K562 (cell line): ENCODE measurements at regions of chr17 and their contacts with region 1.

Region 1: GRCh38 chr17:49567871-49568694 is 7.6 kb upstream of the NXPH3 start:
- DNase-seq: peak; percentile 63 to 86 (median 70)
- ATAC-seq: peak; percentile 75
- H3K4me3 ChIP-seq: no peak overlapping the region
- H3K27ac ChIP-seq: no peak overlapping the region
- H3K4me1 ChIP-seq: peaks cover 0 to 24% of the 10 kb centered on the region in 2 experiments; a peak in 4 of 5 replicates
- H3K27me3 ChIP-seq: peaks cover 11 to 42% of the 10 kb centered on the region in 2 experiments; a peak in 3 of 5 replicates
- CTCF ChIP-seq: peak; percentile 94 to 97 (median 95)
- EP300 ChIP-seq: no peak
- POLR2A ChIP-seq: no peak
- RAD21 ChIP-seq: peak; percentile 88 to 94

Region 2: GRCh38 chr17:49450735-49451134 is 117.3 kb before region 1 on chr17:
- CTCF ChIA-PET with region 1: no interaction called
- POLR2A ChIA-PET with region 1: no interaction called
- in situ Hi-C with region 1: no loop called
- intact Hi-C with region 1: no loop called
- DNase-seq: no peak
- ATAC-seq: no peak
- H3K4me3 ChIP-seq: no peak overlapping the region
- H3K27ac ChIP-seq: no peak overlapping the region
- H3K4me1 ChIP-seq: peaks cover 4 to 5% of the 10 kb centered on the region in 2 experiments; a peak in 3 of 5 replicates
- H3K27me3 ChIP-seq: peaks cover 22 to 39% of the 10 kb centered on the region in 2 experiments; a peak in 4 of 5 replicates
- CTCF ChIP-seq: no peak
- EP300 ChIP-seq: no peak
- POLR2A ChIP-seq: no peak
- RAD21 ChIP-seq: no peak

Region 3: GRCh38 chr17:49694847-49695683 is 127.0 kb after region 1 on chr17:
- CTCF ChIA-PET with region 1: interaction called, 167 read pairs
- POLR2A ChIA-PET with region 1: interaction called, 5 read pairs
- in situ Hi-C with region 1: loop called (anchors 5 kb)
- intact Hi-C with region 1: loop called (anchors 1 kb)
- DNase-seq: peak; percentile 57 to 68 (median 60)
- ATAC-seq: peak; percentile 64
- H3K4me3 ChIP-seq: no peak overlapping the region
- H3K27ac ChIP-seq: no peak overlapping the region
- H3K4me1 ChIP-seq: peaks cover 0 to 4% of the 10 kb centered on the region in 2 experiments; a peak in 1 of 5 replicates
- H3K27me3 ChIP-seq: no peaks in the 10 kb centered on the region; a peak in 1 of 5 replicates
- CTCF ChIP-seq: peak; percentile 91 to 96 (median 92)
- EP300 ChIP-seq: no peak
- POLR2A ChIP-seq: no peak
- RAD21 ChIP-seq: peak; percentile 93 to 96

Region 4: GRCh38 chr17:49779739-49780231 is 211.7 kb after region 1 on chr17:
- CTCF ChIA-PET with region 1: interaction called, 7 read pairs
- POLR2A ChIA-PET with region 1: no interaction called
- in situ Hi-C with region 1: no loop called
- intact Hi-C with region 1: loop called (anchors 2 kb)
- DNase-seq: peak; percentile 35 to 78 (median 44)
- ATAC-seq: peak; percentile 95
- H3K4me3 ChIP-seq: no peak overlapping the region
- H3K27ac ChIP-seq: peak overlapping the region; percentile 35; the same call in 2 of the 3 replicates
- H3K4me1 ChIP-seq: peaks cover 5 to 16% of the 10 kb centered on the region in 2 experiments; a peak in 4 of 5 replicates
- H3K27me3 ChIP-seq: no peaks in the 10 kb centered on the region
- CTCF ChIP-seq: peak; percentile 61 to 81 (median 79)
- EP300 ChIP-seq: no peak
- POLR2A ChIP-seq: no peak
- RAD21 ChIP-seq: peak; percentile 80 to 87

Region 5: GRCh38 chr17:49851387-49852291 is 283.6 kb after region 1 on chr17:
- CTCF ChIA-PET with region 1: interaction called, 7 read pairs
- POLR2A ChIA-PET with region 1: interaction called, 3 read pairs
- in situ Hi-C with region 1: loop called (anchors 5 kb)
- intact Hi-C with region 1: loop called (anchors 2 kb)
- DNase-seq: peak; percentile 74 to 84 (median 82)
- ATAC-seq: peak; percentile 93
- H3K4me3 ChIP-seq: peak overlapping the region; percentile 49
- H3K27ac ChIP-seq: no peak overlapping the region
- H3K4me1 ChIP-seq: peaks cover 0 to 15% of the 10 kb centered on the region in 2 experiments; a peak in 2 of 5 replicates
- H3K27me3 ChIP-seq: peaks cover 3 to 24% of the 10 kb centered on the region in 2 experiments; a peak in 4 of 5 replicates
- CTCF ChIP-seq: peak; percentile 77 to 85 (median 79)
- EP300 ChIP-seq: no peak
- POLR2A ChIP-seq: no peak
- RAD21 ChIP-seq: peak; percentile 70 to 78

Region 6: GRCh38 chr17:49890181-49890821 is 322.2 kb after region 1 on chr17:
- CTCF ChIA-PET with region 1: no interaction called
- POLR2A ChIA-PET with region 1: no interaction called
- in situ Hi-C with region 1: no loop called
- intact Hi-C with region 1: no loop called
- DNase-seq: no peak
- ATAC-seq: peak; percentile 47
- H3K4me3 ChIP-seq: no peak overlapping the region
- H3K27ac ChIP-seq: no peak overlapping the region
- H3K4me1 ChIP-seq: peaks cover 0 to 11% of the 10 kb centered on the region in 2 experiments; a peak in 2 of 5 replicates
- H3K27me3 ChIP-seq: peaks cover 24 to 61% of the 10 kb centered on the region in 2 experiments
- CTCF ChIP-seq: no peak
- EP300 ChIP-seq: no peak
- POLR2A ChIP-seq: no peak
- RAD21 ChIP-seq: no peak

Region 7: DNA sequence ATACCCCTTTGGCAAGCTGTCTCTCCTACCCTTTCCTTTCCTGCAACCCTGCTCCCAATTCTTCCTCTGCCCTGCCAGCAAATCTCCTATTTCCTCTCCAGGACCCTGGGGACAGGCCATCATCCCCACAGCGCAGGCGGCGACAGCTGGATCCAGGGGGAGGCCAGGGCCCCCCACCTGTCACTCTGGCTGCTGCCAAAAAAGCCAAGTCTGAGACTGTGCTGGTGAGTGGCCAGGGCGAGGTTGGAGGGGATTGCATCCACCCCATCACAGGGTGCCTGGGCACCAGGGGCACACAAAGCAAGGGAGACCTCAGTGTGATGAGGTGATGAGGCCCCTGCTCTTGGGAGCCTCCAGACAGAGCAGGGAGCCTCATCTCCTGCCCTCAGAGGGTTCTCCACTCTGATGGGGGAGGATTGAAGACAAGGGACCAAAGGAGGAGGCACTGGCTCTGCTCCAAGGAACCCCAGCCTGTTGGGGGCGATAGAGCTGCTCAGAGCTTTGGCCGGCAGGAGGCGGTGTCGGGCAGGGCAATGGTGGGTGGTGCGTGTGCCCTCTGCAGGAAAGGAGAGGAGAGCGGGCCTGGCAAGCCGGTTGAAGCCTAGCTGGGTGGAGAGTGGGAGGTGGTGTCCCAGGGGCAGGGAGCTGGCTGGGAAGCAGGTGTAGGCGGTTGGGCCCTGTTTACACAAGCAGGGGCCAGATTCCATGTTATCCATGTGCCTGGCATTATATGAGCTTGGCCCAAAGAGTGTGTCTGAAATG is 511.4 kb after region 1 on chr17:
- CTCF ChIA-PET with region 1: no interaction called
- POLR2A ChIA-PET with region 1: no interaction called
- in situ Hi-C with region 1: loop called (anchors 10 kb)
- intact Hi-C with region 1: no loop called
- DNase-seq: peak; percentile 67 to 76 (median 73)
- ATAC-seq: peak; percentile 92
- H3K4me3 ChIP-seq: no peak overlapping the region
- H3K27ac ChIP-seq: no peak overlapping the region
- H3K4me1 ChIP-seq: peaks cover 0 to 18% of the 10 kb centered on the region in 2 experiments; a peak in 1 of 5 replicates
- H3K27me3 ChIP-seq: peaks cover 12 to 29% of the 10 kb centered on the region in 2 experiments
- CTCF ChIP-seq: peak; percentile 99 to 100 (median 100)
- EP300 ChIP-seq: no peak
- POLR2A ChIP-seq: no peak
- RAD21 ChIP-seq: peak; percentile 31 to 73; a peak in 2 of 4 replicates